Activated CD4-positive, alpha-beta memory T cell treated with anti-CD3 and anti-CD28 coated beads for 36 hours (primary cell): ENCODE measurements at regions of chr6 and their contacts with region 1.

Region 1: DNA sequence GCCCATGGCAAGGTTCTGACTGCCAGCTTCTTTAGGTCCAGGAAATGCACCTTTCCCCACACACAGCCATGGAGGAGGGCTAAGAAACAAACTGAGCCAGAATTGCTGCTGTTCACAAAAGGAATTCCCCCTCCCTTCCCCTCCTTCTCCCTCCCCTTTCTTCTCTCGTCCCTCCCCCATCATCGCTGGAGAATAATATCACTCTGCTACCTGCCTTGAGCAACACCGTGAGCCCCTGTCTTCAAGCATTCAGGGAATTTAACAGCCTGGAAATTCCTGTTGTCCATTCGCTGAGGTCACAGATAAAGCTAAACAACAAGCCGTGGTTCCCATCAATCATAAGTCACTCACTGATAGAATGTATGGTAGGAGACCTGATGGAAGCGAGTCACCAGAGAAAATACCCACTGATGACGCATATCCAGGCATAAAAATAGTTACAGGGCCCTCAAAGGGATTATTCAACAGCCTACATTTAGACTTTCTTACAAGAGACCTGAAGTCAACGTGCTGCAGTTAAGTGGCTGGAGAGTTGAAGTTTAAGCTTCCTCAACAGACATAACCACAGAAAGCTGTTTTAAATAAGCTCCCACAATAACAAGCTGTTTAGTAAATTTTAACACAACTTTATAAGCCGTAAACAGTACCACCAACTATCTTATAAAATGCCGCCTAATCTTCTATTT is 59.7 kb downstream of the HIVEP2 start:
- DNase-seq: peak; percentile 50
- H3K4me3 Mint-ChIP-seq: peak overlapping the region; percentile 93
- H3K27ac Mint-ChIP-seq: peak overlapping the region; percentile 97
- H3K4me1 Mint-ChIP-seq: peaks cover 89% of the 10 kb centered on the region
- H3K27me3 Mint-ChIP-seq: no peaks in the 10 kb centered on the region

Region 2: DNA sequence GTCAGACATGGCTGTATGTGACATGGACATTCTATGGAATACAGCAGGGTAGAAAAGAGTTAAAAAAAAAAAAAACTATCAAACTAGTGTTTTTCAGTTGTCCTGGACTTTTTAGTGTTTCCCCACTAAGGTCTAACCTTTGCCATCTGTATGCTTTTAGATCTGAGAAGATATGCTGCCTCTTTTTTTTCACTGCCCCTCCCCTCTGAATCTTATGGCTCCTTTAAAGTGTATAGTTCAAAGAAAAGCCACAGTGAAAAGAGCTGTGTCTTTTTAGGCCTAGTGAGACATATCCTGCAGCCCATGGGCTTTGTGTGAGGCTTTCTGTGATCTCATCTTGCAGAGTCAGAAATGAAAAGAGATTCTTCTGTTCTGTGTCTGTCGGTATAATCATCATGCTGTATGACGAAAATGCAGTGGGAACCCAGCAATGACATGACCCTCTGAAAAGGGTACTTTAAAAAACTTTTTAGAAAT is 554.2 kb before region 1 on chr6:
- CTCF ChIA-PET with region 1: no interaction called
- POLR2A ChIA-PET with region 1: no interaction called
- intact Hi-C with region 1: no loop called
- DNase-seq: peak; percentile 22
- H3K4me3 Mint-ChIP-seq: no peak overlapping the region
- H3K27ac Mint-ChIP-seq: no peak overlapping the region
- H3K4me1 Mint-ChIP-seq: peaks cover 9% of the 10 kb centered on the region
- H3K27me3 Mint-ChIP-seq: no peaks in the 10 kb centered on the region

Region 3: GRCh38 chr6:142773859-142774648 is 111.3 kb before region 1 on chr6:
- CTCF ChIA-PET with region 1: interaction called, 3 read pairs
- POLR2A ChIA-PET with region 1: no interaction called
- intact Hi-C with region 1: loop called (anchors 2 kb)
- DNase-seq: peak; percentile 56
- H3K4me3 Mint-ChIP-seq: peak overlapping the region; percentile 62
- H3K27ac Mint-ChIP-seq: peak overlapping the region; percentile 93
- H3K4me1 Mint-ChIP-seq: peaks cover 62% of the 10 kb centered on the region
- H3K27me3 Mint-ChIP-seq: no peaks in the 10 kb centered on the region

Region 4: GRCh38 chr6:142819603-142820337 is 65.6 kb before region 1 on chr6:
- CTCF ChIA-PET with region 1: interaction called, 8 read pairs
- POLR2A ChIA-PET with region 1: interaction called, 4 read pairs
- intact Hi-C with region 1: loop called (anchors 1 kb)
- DNase-seq: peak; percentile 63
- H3K4me3 Mint-ChIP-seq: peak overlapping the region; percentile 79
- H3K27ac Mint-ChIP-seq: peak overlapping the region; percentile 97
- H3K4me1 Mint-ChIP-seq: peaks cover 77% of the 10 kb centered on the region
- H3K27me3 Mint-ChIP-seq: peaks cover 2% of the 10 kb centered on the region

Region 5: GRCh38 chr6:142850679-142851423 is 34.5 kb before region 1 on chr6:
- CTCF ChIA-PET with region 1: interaction called, 10 read pairs
- POLR2A ChIA-PET with region 1: interaction called, 4 read pairs
- intact Hi-C with region 1: loop called (anchors 1 kb)
- DNase-seq: peak; percentile 71
- H3K4me3 Mint-ChIP-seq: peak overlapping the region; percentile 58
- H3K27ac Mint-ChIP-seq: peak overlapping the region; percentile 94
- H3K4me1 Mint-ChIP-seq: peaks cover 97% of the 10 kb centered on the region
- H3K27me3 Mint-ChIP-seq: no peaks in the 10 kb centered on the region

Region 6: GRCh38 chr6:142871910-142872331 is 13.4 kb before region 1 on chr6:
- CTCF ChIA-PET with region 1: interaction called, 5 read pairs
- POLR2A ChIA-PET with region 1: interaction called, 6 read pairs
- intact Hi-C with region 1: loop called (anchors 1 kb)
- DNase-seq: peak; percentile 80
- H3K4me3 Mint-ChIP-seq: peak overlapping the region; percentile 38
- H3K27ac Mint-ChIP-seq: peak overlapping the region; percentile 82
- H3K4me1 Mint-ChIP-seq: peaks cover 85% of the 10 kb centered on the region
- H3K27me3 Mint-ChIP-seq: no peaks in the 10 kb centered on the region

Region 7: DNA sequence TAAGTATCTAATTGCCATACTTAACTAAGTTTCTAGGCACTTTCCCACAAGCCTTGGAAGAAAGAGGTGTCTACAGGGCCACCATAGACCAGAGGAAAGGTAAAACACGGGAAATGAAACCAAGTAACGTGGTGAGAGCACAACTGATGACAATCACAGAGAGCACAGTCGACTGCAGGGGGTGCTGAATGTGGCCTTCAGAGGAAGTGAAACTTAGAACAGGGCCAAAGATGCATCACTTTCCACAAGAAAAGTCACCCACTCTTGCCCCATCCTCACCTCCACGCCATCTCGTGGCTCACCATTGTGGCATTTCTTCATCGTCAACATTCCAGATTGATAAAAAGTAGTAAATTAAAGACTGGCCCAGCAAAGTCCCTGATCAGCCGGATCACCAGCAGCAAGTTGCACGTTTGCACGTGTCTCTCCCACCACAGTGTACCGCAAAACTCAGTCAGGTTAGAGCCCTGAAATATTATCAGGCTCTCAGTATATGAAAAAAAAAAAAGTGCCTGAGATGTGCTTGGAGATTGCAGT is 28.3 kb after region 1 on chr6:
- CTCF ChIA-PET with region 1: no interaction called
- POLR2A ChIA-PET with region 1: no interaction called
- intact Hi-C with region 1: loop called (anchors 1 kb)
- DNase-seq: peak; percentile 84
- H3K4me3 Mint-ChIP-seq: peak overlapping the region; percentile 72
- H3K27ac Mint-ChIP-seq: peak overlapping the region; percentile 94
- H3K4me1 Mint-ChIP-seq: peaks cover 80% of the 10 kb centered on the region
- H3K27me3 Mint-ChIP-seq: no peaks in the 10 kb centered on the region

Region 8: DNA sequence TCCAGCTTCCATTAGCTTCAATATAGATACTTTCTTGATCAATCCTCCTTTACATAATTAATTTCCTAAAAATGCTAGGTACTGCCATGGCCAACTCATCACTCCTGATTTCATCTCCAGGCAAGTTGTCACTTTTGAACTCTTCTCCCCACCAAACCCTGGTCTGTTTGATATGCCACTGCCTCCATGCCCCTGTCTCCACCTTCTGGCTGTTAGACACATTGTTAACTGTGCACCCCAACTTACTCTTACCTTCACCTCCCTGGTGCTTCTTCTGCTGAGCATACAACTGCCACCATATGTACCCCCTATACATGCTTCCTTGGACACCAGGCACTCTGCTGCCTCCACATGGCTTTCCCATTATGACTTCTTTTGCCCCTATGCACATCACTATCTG is 153.5 kb after region 1 on chr6:
- CTCF ChIA-PET with region 1: no interaction called
- POLR2A ChIA-PET with region 1: no interaction called
- intact Hi-C with region 1: no loop called
- DNase-seq: no peak
- H3K4me3 Mint-ChIP-seq: no peak overlapping the region
- H3K27ac Mint-ChIP-seq: no peak overlapping the region
- H3K4me1 Mint-ChIP-seq: peaks cover 9% of the 10 kb centered on the region
- H3K27me3 Mint-ChIP-seq: peaks cover 12% of the 10 kb centered on the region

Region 9: GRCh38 chr6:144602523-144603180 is 1717.3 kb after region 1 on chr6:
- CTCF ChIA-PET with region 1: no interaction called
- POLR2A ChIA-PET with region 1: no interaction called
- intact Hi-C with region 1: no loop called
- DNase-seq: peak; percentile 22
- H3K4me3 Mint-ChIP-seq: no peak overlapping the region
- H3K27ac Mint-ChIP-seq: no peak overlapping the region
- H3K4me1 Mint-ChIP-seq: peaks cover 33% of the 10 kb centered on the region
- H3K27me3 Mint-ChIP-seq: no peaks in the 10 kb centered on the region